Activated CD4-positive, alpha-beta T cell treated with anti-CD3 and anti-CD28 coated beads for 36 hours (primary cell): ENCODE measurements at regions of chr4 and their contacts with region 1.

Region 1: GRCh38 chr4:40316782-40317635 is 18.1 kb upstream of the CHRNA9 start:
- DNase-seq: peak; percentile 73
- ATAC-seq: peak; percentile 80
- H3K4me3 Mint-ChIP-seq: peak overlapping the region; percentile 77
- H3K27ac Mint-ChIP-seq: peak overlapping the region; percentile 100
- H3K4me1 Mint-ChIP-seq: peaks cover 58% of the 10 kb centered on the region
- H3K27me3 Mint-ChIP-seq: no peaks in the 10 kb centered on the region

Region 2: DNA sequence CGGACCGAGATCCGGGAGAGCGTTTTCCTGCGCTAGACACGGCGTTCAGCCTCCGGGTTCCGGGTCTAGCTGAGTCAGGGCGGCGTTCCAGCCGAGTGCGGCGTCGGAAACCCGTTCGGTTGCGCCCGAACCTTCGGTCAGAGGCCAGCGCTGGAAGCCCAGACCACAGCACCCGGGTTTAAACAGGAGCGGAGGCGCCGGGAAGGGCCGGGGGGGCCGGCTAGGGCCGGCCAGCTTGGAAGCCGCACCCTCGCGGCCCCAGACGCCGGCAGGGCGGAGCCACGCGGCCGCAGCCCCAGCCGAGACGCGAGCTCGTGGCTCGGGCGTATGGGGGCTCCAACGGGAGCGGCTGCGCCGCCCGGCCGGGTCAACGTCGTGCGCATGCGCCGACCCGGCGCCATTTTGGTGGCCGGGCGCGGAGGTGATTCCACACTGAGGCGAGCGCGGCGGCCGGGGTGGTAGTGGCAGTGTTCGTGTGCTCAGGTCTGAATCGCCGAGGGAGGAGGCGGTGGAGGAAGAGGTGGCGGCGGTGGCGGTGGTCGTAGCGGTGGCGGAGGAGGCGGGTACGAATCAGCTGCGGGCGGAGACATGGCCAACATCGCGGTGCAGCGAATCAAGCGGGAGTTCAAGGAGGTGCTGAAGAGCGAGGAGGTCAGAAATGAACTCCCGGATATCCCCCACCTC is 619.1 kb before region 1 on chr4 and contains the start of gene UBE2K:
- CTCF ChIA-PET with region 1: no interaction called
- POLR2A ChIA-PET with region 1: no interaction called
- intact Hi-C with region 1: loop called in 1 of 2 experiments (anchors 2 kb)
- DNase-seq: peak; percentile 93
- ATAC-seq: peak; percentile 87
- H3K4me3 Mint-ChIP-seq: peak within 1 kb of the TSS; percentile 99
- H3K27ac Mint-ChIP-seq: peak within 1 kb of the TSS; percentile 99
- H3K4me1 Mint-ChIP-seq: peaks cover 28% of the 10 kb centered on the region
- H3K27me3 Mint-ChIP-seq: no peaks in the 10 kb centered on the region
- total RNA-seq, gene UBE2K: 87.2 to 122 TPM

Region 3: GRCh38 chr4:40157436-40157835 is 159.6 kb before region 1 on chr4:
- CTCF ChIA-PET with region 1: interaction called, 15 read pairs
- POLR2A ChIA-PET with region 1: no interaction called
- intact Hi-C with region 1: no loop called
- DNase-seq: no peak
- ATAC-seq: no peak
- H3K4me3 Mint-ChIP-seq: no peak overlapping the region
- H3K27ac Mint-ChIP-seq: no peak overlapping the region
- H3K4me1 Mint-ChIP-seq: peaks cover 23% of the 10 kb centered on the region
- H3K27me3 Mint-ChIP-seq: no peaks in the 10 kb centered on the region

Region 4: GRCh38 chr4:40199999-40200874 is 116.8 kb before region 1 on chr4:
- CTCF ChIA-PET with region 1: interaction called, 17 read pairs
- POLR2A ChIA-PET with region 1: interaction called, 32 read pairs
- intact Hi-C with region 1: loop called (anchors 1 kb)
- DNase-seq: peak; percentile 90
- ATAC-seq: peak; percentile 53
- H3K4me3 Mint-ChIP-seq: peak overlapping the region; percentile 98
- H3K27ac Mint-ChIP-seq: peak overlapping the region; percentile 100
- H3K4me1 Mint-ChIP-seq: peaks cover 40% of the 10 kb centered on the region
- H3K27me3 Mint-ChIP-seq: no peaks in the 10 kb centered on the region

Region 5: DNA sequence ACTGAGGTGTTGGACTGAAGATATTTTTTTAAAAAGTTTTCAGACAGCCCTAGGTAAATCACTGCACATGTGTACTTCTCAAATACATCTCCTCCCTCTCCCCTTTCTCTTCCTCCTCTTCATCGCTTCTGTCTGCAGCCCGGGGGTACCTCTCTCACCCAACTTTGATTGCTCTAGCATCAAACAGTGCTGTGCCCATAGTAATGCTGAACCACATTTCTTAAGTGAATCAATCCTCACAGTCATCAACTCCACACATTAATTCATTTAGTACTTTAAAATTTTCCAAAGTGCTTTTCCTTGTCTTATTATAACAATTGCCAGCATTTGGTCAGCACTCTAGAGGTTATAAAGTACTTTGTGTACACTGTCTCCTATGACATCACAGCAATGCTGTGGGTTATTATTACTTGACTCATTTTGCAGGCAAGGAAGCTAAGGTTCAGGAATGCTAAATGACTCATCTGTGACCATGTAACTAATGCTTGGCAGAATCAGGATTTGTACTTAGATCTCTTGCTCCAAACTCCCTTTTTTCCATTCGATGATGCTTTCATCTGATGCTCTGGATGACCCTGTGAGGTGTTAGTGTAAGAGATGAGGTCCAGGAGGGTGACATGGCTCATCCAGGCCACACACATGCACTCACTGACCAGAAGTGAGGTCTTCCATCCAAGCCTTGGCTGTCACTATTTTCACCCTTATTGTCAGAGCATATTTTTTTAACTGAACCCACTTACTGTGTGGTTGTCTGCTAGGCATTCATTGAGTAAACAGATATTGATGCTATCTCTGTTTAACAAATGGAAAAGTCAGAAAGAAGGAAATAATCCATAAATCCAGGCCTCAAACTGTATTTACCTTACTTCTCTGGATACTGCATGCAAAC is 61.4 kb before region 1 on chr4:
- CTCF ChIA-PET with region 1: interaction called, 6 read pairs
- POLR2A ChIA-PET with region 1: interaction called, 3 read pairs
- intact Hi-C with region 1: loop called (anchors 1 to 2 kb)
- DNase-seq: no peak
- ATAC-seq: peak; percentile 31
- H3K4me3 Mint-ChIP-seq: no peak overlapping the region
- H3K27ac Mint-ChIP-seq: peak overlapping the region; percentile 44
- H3K4me1 Mint-ChIP-seq: peaks cover 76% of the 10 kb centered on the region
- H3K27me3 Mint-ChIP-seq: no peaks in the 10 kb centered on the region

Region 6: DNA sequence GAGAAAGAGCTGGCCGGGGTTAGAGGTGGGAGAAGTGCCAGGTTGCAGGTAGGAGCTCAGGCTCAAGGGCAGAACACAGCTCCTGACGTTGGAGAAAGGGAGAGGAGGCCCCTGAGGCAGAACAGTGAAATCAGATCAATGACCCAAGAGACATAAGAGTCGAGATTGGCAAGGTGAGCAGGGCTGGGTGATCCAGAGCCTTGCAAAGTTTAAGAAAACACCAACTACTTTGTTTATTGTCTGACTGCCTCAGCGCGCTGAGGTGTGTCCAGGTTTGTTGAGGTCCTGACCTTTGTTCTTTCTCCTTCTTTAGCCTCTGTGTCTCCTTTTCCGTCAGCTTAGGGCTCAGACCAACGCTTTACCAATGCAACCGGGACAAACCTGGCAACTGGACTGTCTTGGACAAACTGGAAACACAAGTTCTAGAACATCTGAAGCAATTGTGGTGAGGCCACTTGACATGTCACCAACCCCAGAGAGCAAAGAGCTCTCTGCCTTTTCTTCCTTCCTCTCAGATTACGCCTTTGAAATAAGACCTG is 46.4 kb after region 1 on chr4:
- CTCF ChIA-PET with region 1: no interaction called
- POLR2A ChIA-PET with region 1: no interaction called
- intact Hi-C with region 1: no loop called
- DNase-seq: no peak
- ATAC-seq: no peak
- H3K4me3 Mint-ChIP-seq: no peak overlapping the region
- H3K27ac Mint-ChIP-seq: no peak overlapping the region
- H3K4me1 Mint-ChIP-seq: no peaks in the 10 kb centered on the region
- H3K27me3 Mint-ChIP-seq: no peaks in the 10 kb centered on the region